Activated naive CD4-positive, alpha-beta T cell treated with anti-CD3 and anti-CD28 coated beads for 36 hours (primary cell): ENCODE measurements at regions of chr16 and their contacts with region 1.

Region 1: DNA sequence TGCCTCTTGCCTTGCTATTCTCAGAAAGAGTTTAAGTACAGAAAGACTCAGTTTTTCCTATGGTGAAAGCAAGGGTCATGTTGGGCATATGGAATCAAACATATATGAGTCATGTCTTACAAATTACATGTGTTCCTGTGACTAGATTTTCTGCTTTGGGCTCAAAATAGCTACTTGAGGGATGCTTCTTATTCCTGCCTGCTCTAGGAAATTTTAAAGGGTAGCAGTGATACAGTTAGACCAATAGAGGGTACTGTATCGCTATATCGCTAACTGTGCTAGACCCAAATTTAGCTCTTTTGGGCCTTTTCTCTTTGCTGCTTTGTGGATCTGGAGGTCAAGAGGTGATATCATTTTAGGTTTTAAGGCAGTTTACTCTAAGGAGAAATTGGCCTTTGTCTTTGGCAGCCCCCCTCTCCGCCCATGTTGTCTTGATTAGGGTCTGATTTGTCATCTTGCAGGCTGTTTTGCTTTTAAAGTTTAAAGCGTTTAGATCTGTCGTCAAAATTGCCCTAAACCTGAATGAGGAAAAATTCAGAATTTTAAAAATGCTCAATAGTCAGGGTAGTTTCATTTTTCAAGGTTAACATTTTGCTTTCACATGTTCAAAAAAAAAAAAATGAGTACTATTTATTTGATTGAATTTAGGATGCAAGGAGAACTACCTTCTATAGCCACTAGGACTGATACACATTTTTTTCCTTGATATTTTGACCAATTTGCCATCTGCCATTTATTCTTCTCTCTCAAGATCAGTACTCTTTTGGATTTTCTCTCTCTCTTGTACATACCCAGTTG is 8.8 kb downstream of the NFATC3 start:
- DNase-seq: no peak
- H3K4me3 Mint-ChIP-seq: peak overlapping the region; percentile 14
- H3K27ac Mint-ChIP-seq: peak overlapping the region; percentile 72
- H3K4me1 Mint-ChIP-seq: peaks cover 80% of the 10 kb centered on the region
- H3K27me3 Mint-ChIP-seq: no peaks in the 10 kb centered on the region

Region 2: DNA sequence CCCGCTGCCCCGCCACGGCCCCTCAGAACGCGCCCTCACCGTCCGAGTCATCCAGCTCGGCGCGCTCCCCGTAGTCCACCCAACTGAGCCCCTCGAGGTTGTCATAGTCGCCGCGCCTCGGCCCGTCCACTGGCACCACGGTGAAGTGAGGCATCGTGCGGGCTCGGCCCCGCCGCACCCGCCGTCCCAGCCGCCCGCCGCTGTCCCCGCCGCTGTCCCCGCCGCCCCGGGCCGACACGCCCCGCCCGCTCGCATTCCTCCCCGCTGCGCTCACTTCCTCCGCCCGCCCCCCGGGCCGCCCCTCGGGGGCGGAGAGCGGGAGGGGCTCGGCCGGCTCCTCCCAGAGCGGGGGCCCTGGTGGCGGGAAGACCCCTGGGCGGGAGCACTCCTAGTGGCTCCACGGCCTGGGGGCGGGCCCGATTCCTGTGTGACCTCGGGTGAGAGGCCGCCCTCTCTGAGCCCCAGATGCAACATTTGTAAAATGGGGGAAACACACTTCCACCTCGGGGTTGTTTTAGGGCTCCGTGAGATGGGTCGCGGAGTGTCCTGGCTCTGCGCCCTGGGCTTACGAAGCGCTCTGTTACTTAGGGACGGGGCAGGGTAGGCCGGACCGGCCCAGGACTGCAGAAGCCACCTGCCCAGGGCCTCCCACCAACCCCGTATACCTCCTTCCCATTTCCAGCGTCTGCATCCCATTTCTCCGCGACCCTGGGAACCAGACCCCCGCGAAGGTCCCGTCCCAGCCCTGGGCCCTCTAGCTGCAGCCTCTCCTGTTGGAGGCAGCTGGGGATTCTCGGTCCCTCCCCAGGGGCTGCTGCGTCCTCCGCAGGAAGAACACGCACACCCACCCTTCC is 125.4 kb before region 1 on chr16 and contains the start of gene SLC12A4:
- CTCF ChIA-PET with region 1: no interaction called
- intact Hi-C with region 1: no loop called
- DNase-seq: peak; percentile 93
- H3K4me3 Mint-ChIP-seq: peak within 1 kb of the TSS; percentile 97
- H3K27ac Mint-ChIP-seq: peak within 1 kb of the TSS; percentile 78
- H3K4me1 Mint-ChIP-seq: peaks cover 10% of the 10 kb centered on the region
- H3K27me3 Mint-ChIP-seq: no peaks in the 10 kb centered on the region
- total RNA-seq, gene SLC12A4: 24.3 to 28.9 TPM

Region 3: GRCh38 chr16:68116256-68116867 is 22.3 kb after region 1 on chr16:
- CTCF ChIA-PET with region 1: interaction called, 11 read pairs
- intact Hi-C with region 1: loop called (anchors 2 kb)
- DNase-seq: no peak
- H3K4me3 Mint-ChIP-seq: no peak overlapping the region
- H3K27ac Mint-ChIP-seq: no peak overlapping the region
- H3K4me1 Mint-ChIP-seq: peaks cover 85% of the 10 kb centered on the region
- H3K27me3 Mint-ChIP-seq: no peaks in the 10 kb centered on the region

Region 4: DNA sequence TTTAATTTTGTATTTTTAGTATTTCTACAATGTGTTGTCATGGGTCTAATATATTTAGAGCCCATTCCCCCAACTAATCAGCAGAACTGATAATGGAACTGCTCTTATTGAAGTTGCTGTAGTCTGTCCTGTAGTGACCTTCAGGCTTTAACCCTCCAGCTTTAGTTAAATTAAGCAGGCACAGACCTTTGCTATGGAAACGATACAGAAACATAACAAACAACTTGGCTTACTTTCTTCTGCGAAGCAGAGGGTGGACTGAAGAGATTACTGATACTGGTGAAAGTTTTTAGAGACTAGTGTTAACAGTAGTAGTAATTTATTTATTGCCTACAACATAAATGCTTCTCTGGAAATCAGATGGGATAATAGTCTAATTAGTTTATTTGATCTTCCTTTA is 52.6 kb after region 1 on chr16:
- CTCF ChIA-PET with region 1: interaction called, 6 read pairs
- intact Hi-C with region 1: loop called (anchors 5 kb)
- DNase-seq: no peak
- H3K4me3 Mint-ChIP-seq: no peak overlapping the region
- H3K27ac Mint-ChIP-seq: no peak overlapping the region
- H3K4me1 Mint-ChIP-seq: peaks cover 55% of the 10 kb centered on the region
- H3K27me3 Mint-ChIP-seq: no peaks in the 10 kb centered on the region

Region 5: DNA sequence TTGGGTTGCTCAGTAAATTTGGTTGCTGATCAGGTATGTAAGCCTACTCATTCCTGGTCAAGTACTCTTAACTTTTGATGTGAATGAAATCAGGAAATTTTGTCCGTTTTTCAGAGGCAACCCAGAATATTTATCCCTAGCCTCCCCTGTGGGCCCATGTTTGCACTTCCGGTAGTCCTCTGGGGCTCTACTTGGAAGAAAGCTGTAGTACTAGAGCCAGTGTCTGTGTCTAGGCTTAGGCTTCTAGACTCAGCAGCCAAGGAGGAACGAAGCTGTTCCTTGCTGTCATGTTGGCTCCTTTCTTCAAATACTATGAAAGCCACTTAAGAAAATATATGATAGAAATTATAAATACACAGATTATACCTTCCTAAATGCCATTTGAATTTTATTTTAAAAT is 120.7 kb after region 1 on chr16:
- CTCF ChIA-PET with region 1: interaction called, 3 read pairs
- intact Hi-C with region 1: loop called (anchors 1 kb)
- DNase-seq: no peak
- H3K4me3 Mint-ChIP-seq: no peak overlapping the region
- H3K27ac Mint-ChIP-seq: no peak overlapping the region
- H3K4me1 Mint-ChIP-seq: peaks cover 41% of the 10 kb centered on the region
- H3K27me3 Mint-ChIP-seq: no peaks in the 10 kb centered on the region

Region 6: GRCh38 chr16:68247400-68247799 is 153.4 kb after region 1 on chr16:
- CTCF ChIA-PET with region 1: no interaction called
- intact Hi-C with region 1: no loop called
- DNase-seq: no peak
- H3K4me3 Mint-ChIP-seq: no peak overlapping the region
- H3K27ac Mint-ChIP-seq: no peak overlapping the region
- H3K4me1 Mint-ChIP-seq: peaks cover 20% of the 10 kb centered on the region
- H3K27me3 Mint-ChIP-seq: no peaks in the 10 kb centered on the region

Region 7: GRCh38 chr16:68473358-68474070 is 379.5 kb after region 1 on chr16:
- CTCF ChIA-PET with region 1: no interaction called
- intact Hi-C with region 1: no loop called
- DNase-seq: no peak
- H3K4me3 Mint-ChIP-seq: no peak overlapping the region
- H3K27ac Mint-ChIP-seq: no peak overlapping the region
- H3K4me1 Mint-ChIP-seq: peaks cover 25% of the 10 kb centered on the region
- H3K27me3 Mint-ChIP-seq: no peaks in the 10 kb centered on the region